Mammary epithelial cell (primary cell): ENCODE measurements at regions of chr19 and their contacts with region 1.

Region 1: DNA sequence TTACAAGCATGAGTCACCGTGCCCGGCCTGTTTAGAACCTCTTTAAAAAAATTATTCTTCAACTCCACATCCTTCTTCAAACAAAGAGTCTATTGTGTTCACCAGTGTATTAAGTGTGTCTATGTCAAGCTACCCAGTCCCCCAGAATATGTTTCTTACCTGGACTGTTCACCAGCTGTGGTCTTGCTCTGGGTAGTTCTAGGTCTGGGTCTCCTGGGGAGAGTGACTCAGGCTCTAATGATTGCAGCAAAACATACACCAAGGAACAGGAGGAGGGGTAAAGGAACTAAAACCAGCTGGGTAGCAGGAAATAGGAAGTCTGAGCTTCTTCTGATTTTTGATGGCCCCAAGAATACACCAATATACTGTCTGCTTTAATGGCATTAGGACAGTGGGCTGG is at the start of gene FPR1:
- DNase-seq: peak; percentile 95
- H3K4me3 ChIP-seq: no peak within 1 kb of the TSS
- H3K27ac ChIP-seq: peak within 1 kb of the TSS; percentile 46
- H3K4me1 ChIP-seq: peaks cover 13% of the 10 kb centered on the region
- H3K27me3 ChIP-seq: no peaks in the 10 kb centered on the region
- CTCF ChIP-seq: no peak
- total RNA-seq, gene FPR1: under 0.01 to 0.31 TPM

Region 2: DNA sequence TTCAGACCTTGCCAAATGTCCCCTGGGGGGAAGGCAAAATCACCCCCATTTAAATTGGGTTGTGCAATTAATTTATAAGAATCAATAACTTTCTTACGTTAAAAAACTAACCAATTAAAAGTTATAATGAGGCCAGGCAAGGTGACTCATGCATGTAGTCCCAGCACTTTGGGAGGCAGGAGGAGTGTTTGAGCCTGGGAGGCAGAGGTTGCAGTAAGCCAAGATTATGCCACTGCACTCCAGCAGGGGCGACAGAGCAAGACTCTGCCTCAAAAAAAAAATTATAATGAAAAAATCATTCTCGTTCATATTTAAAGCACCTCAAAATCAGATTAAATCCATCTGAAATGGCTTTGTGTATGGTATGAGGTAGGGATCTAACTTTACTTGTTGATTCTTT is 86.7 kb before region 1 on chr19:
- CTCF ChIA-PET with region 1: no interaction called
- dilution Hi-C with region 1: no loop called
- in situ Hi-C with region 1: no loop called
- intact Hi-C with region 1: no loop called
- DNase-seq: peak; percentile 34
- H3K4me3 ChIP-seq: no peak overlapping the region
- H3K27ac ChIP-seq: no peak overlapping the region
- H3K4me1 ChIP-seq: no peaks in the 10 kb centered on the region
- H3K27me3 ChIP-seq: no peaks in the 10 kb centered on the region
- CTCF ChIP-seq: peak; percentile 28 to 54

Region 3: GRCh38 chr19:51688672-51689571 is 62.7 kb before region 1 on chr19:
- CTCF ChIA-PET with region 1: no interaction called
- dilution Hi-C with region 1: no loop called
- in situ Hi-C with region 1: no loop called
- intact Hi-C with region 1: loop called (anchors 2 kb)
- DNase-seq: peak; percentile 94
- H3K4me3 ChIP-seq: peak overlapping the region; percentile 80 to 94 (median 82)
- H3K27ac ChIP-seq: peak overlapping the region; percentile 58
- H3K4me1 ChIP-seq: peaks cover 25% of the 10 kb centered on the region
- H3K27me3 ChIP-seq: no peaks in the 10 kb centered on the region
- CTCF ChIP-seq: no peak

Region 4: GRCh38 chr19:51800473-51801244 is 49.0 kb after region 1 on chr19:
- CTCF ChIA-PET with region 1: no interaction called
- dilution Hi-C with region 1: loop called (anchors 5 kb)
- in situ Hi-C with region 1: no loop called
- intact Hi-C with region 1: no loop called
- DNase-seq: no peak
- H3K4me3 ChIP-seq: no peak overlapping the region
- H3K27ac ChIP-seq: no peak overlapping the region
- H3K4me1 ChIP-seq: peaks cover 3% of the 10 kb centered on the region
- H3K27me3 ChIP-seq: no peaks in the 10 kb centered on the region
- CTCF ChIP-seq: no peak